ENCODE measurements at regions of chr3 and their contacts with region 1.

Region 1: GRCh38 chr3:3179407-3180094 is at the start of gene CRBN:
- DNase-seq: peak; percentile 89 to 95
- ATAC-seq: peak; percentile 96 to 99 (median 98)
- H3K4me3 ChIP-seq: peak within 1 kb of the TSS; percentile 62
- H3K4me3 Mint-ChIP-seq: peak within 1 kb of the TSS; percentile 95
- H3K27ac ChIP-seq: peak within 1 kb of the TSS; percentile 64
- H3K27ac Mint-ChIP-seq: peak within 1 kb of the TSS; percentile 90 to 92
- H3K4me1 ChIP-seq: peaks cover 18% of the 10 kb centered on the region
- H3K4me1 Mint-ChIP-seq: peaks cover 42 to 43% of the 10 kb centered on the region in 2 donors
- H3K27me3 ChIP-seq: no peaks in the 10 kb centered on the region
- H3K27me3 Mint-ChIP-seq: no peaks in the 10 kb centered on the region
- CTCF ChIP-seq: peak; percentile 99
- total RNA-seq, gene CRBN: 126 to 166 (median 139) TPM

Region 2: GRCh38 chr3:3126477-3127431 is 52.8 kb before region 1 on chr3 and contains the start of gene TRNT1:
- intact Hi-C with region 1: loop called (anchors 2 kb)
- DNase-seq: peak; percentile 96 to 99
- ATAC-seq: peak; percentile 91 to 95 (median 91)
- H3K4me3 ChIP-seq: peak within 1 kb of the TSS; percentile 81
- H3K4me3 Mint-ChIP-seq: peak within 1 kb of the TSS; percentile 97
- H3K27ac ChIP-seq: peak within 1 kb of the TSS; percentile 94
- H3K27ac Mint-ChIP-seq: peak within 1 kb of the TSS; percentile 99 to 100
- H3K4me1 ChIP-seq: peaks cover 23% of the 10 kb centered on the region
- H3K4me1 Mint-ChIP-seq: peaks cover 34 to 43% of the 10 kb centered on the region in 2 donors
- H3K27me3 ChIP-seq: no peaks in the 10 kb centered on the region
- H3K27me3 Mint-ChIP-seq: no peaks in the 10 kb centered on the region
- CTCF ChIP-seq: no peak
- total RNA-seq, gene TRNT1: 33.3 to 41.9 (median 36.6) TPM